ENCODE measurements at regions of chr18 and their contacts with region 1.

Region 1: DNA sequence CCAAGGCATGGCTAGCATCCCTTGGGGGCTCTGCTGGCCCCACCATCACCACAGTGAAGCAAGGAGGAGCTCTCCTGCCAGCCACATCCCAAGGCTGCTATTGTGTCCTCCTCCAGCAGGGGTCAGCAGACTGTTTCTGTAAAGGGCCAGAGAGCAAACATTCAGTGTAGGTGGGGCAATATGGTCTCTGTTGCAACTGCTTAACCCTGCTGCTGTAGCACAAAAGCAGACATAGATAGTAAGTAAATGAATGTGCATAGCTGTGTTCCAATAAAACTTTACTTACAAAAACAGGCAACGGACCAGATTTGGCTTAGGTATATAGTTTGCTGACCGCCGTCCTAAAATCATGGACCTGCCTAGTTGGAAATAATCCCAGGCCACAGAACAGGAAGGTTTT is 36.4 kb upstream of the ZBTB7C start:
- DNase-seq: peak; percentile 66
- H3K4me3 ChIP-seq: peak overlapping the region in 1 of 2 experiments; percentile 21; a peak in 1 of 4 replicates
- H3K27ac ChIP-seq: peak overlapping the region in 1 of 2 experiments; percentile 22; a peak in 1 of 4 replicates
- H3K4me1 ChIP-seq: peaks cover 0 to 21% of the 10 kb centered on the region in 2 experiments; a peak in 1 of 4 replicates
- H3K27me3 ChIP-seq: peaks cover 56% of the 10 kb centered on the region; the same call in 1 of the 2 replicates
- CTCF ChIP-seq: peak; percentile 88
- EP300 ChIP-seq: no peak
- RAD21 ChIP-seq: peak; percentile 68

Region 2: GRCh38 chr18:48007955-48008701 is 437.4 kb before region 1 on chr18:
- CTCF ChIA-PET with region 1: interaction called, 10 read pairs
- POLR2A ChIA-PET with region 1: no interaction called
- DNase-seq: peak; percentile 99
- H3K4me3 ChIP-seq: peak overlapping the region; percentile 64 to 70
- H3K27ac ChIP-seq: peak overlapping the region in 1 of 2 experiments; percentile 47; a peak in 1 of 4 replicates
- H3K4me1 ChIP-seq: peaks cover 3 to 19% of the 10 kb centered on the region in 2 experiments; a peak in 2 of 4 replicates
- H3K27me3 ChIP-seq: peaks cover 8% of the 10 kb centered on the region; the same call in 1 of the 2 replicates
- CTCF ChIP-seq: peak; percentile 45
- EP300 ChIP-seq: no peak
- RAD21 ChIP-seq: no peak

Region 3: GRCh38 chr18:48374423-48375149 is 71.0 kb before region 1 on chr18:
- CTCF ChIA-PET with region 1: interaction called, 11 read pairs
- POLR2A ChIA-PET with region 1: no interaction called
- DNase-seq: peak; percentile 41
- H3K4me3 ChIP-seq: no peak overlapping the region
- H3K27ac ChIP-seq: peak overlapping the region in 1 of 2 experiments; percentile 47; a peak in 1 of 4 replicates
- H3K4me1 ChIP-seq: peaks cover 0 to 34% of the 10 kb centered on the region in 2 experiments; a peak in 1 of 4 replicates
- H3K27me3 ChIP-seq: no peaks in the 10 kb centered on the region; the same call in 1 of the 2 replicates
- CTCF ChIP-seq: no peak
- EP300 ChIP-seq: 0 out of 4 replicates have a peak, but pooled peaks of 1 of the 2 experiments have one; percentile 5
- RAD21 ChIP-seq: no peak

Region 4: GRCh38 chr18:48412339-48412929 is 33.1 kb before region 1 on chr18:
- CTCF ChIA-PET with region 1: interaction called, 27 read pairs
- POLR2A ChIA-PET with region 1: no interaction called
- DNase-seq: peak; percentile 66
- H3K4me3 ChIP-seq: no peak overlapping the region; a peak in 1 of 4 replicates
- H3K27ac ChIP-seq: no peak overlapping the region
- H3K4me1 ChIP-seq: peaks cover 0 to 16% of the 10 kb centered on the region in 2 experiments; a peak in 1 of 4 replicates
- H3K27me3 ChIP-seq: peaks cover 48% of the 10 kb centered on the region
- CTCF ChIP-seq: peak; percentile 79
- EP300 ChIP-seq: no peak
- RAD21 ChIP-seq: peak; percentile 64

Region 5: DNA sequence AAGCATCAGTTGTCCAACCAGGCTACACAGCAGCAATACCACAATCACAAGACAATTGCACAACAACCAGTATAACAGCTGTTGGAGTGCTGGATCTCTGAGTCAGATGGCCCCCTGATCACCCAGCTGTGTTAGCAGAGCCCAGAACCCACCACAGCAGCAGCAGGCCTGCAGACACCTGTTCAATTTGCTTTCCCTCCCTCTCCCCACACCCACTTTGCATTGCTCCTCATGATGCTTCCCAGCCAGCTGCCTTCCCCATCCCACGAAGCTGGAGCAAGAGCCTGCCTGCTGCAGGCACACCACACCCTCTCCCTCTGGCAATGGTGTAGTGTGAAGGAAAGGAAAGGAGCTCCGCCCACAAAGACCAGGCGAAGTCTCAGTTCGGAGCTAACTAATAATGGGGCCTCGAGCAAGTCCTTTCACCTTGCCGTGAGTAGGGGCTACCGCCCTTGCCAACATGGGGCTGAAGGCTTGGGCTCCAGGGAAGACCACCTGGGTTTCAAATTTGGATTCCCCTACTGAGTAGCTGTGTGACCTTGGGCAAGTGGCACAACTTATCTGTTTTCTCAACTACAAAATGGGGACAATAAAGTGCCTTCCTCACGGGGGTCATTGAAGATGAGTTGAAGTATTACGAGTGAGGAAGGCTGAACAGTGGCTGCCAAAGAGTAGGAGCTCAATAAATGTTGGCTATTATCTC is 16.9 kb before region 1 on chr18:
- CTCF ChIA-PET with region 1: interaction called, 18 read pairs
- POLR2A ChIA-PET with region 1: interaction called, 3 read pairs
- DNase-seq: no peak
- H3K4me3 ChIP-seq: no peak overlapping the region
- H3K27ac ChIP-seq: no peak overlapping the region
- H3K4me1 ChIP-seq: no peaks in the 10 kb centered on the region; a peak in 1 of 4 replicates
- H3K27me3 ChIP-seq: peaks cover 26% of the 10 kb centered on the region; the same call in 1 of the 2 replicates
- CTCF ChIP-seq: no peak
- EP300 ChIP-seq: no peak
- RAD21 ChIP-seq: no peak

Region 6: DNA sequence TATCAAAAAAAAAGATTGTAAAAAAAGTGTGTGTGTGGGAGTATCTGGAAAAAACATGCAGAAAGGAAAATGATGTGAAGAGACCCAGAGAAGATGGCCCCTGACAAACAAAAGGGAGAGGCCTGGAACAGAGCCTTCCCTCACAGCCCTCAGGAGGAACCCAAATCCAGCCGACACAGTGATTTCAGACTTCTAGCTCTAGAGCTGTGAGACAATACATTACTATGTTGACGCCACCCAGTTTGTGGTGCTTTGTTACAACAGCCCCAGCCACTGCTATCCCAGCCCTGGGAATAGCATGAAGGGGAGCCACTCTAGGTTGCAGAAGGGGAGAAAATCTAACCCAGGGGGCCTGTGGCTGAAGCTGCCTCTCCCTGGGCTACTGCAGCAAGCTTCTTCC is 22.6 kb after region 1 on chr18:
- CTCF ChIA-PET with region 1: interaction called, 164 read pairs
- POLR2A ChIA-PET with region 1: no interaction called
- DNase-seq: no peak
- H3K4me3 ChIP-seq: no peak overlapping the region
- H3K27ac ChIP-seq: no peak overlapping the region
- H3K4me1 ChIP-seq: peaks cover 0 to 3% of the 10 kb centered on the region in 2 experiments; a peak in 2 of 4 replicates
- H3K27me3 ChIP-seq: no peaks in the 10 kb centered on the region
- CTCF ChIP-seq: no peak
- EP300 ChIP-seq: no peak
- RAD21 ChIP-seq: no peak

Region 7: DNA sequence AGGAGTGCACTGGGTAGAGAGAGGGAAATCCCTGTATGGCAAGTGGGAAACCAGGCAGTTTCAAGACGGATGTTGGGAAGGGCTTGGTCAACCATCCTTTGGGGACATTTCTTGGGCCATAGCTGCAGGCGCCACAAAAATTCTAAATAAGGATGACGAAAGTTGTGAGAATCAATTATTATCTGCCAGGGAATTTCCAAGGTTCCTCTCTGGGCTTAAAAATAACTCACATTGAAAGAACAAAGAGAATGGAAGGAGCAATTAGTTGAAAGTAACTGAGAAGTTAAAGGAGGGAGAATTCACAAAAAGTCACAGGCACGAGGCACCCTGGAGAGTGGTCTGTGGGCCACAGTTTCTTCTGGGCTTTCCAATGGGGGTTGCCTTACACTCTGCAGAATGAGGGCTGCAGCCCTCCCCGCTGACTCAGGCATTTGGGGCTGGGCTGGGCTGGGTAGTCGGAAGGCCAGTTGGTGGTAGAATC is 309.5 kb after region 1 on chr18:
- CTCF ChIA-PET with region 1: no interaction called
- POLR2A ChIA-PET with region 1: no interaction called
- DNase-seq: no peak
- H3K4me3 ChIP-seq: no peak overlapping the region
- H3K27ac ChIP-seq: no peak overlapping the region
- H3K4me1 ChIP-seq: peaks cover 0 to 43% of the 10 kb centered on the region in 2 experiments; a peak in 2 of 4 replicates
- H3K27me3 ChIP-seq: no peaks in the 10 kb centered on the region
- CTCF ChIP-seq: no peak
- EP300 ChIP-seq: no peak
- RAD21 ChIP-seq: no peak